CD14-positive monocyte (primary cell): ENCODE measurements at regions of chr5 and their contacts with region 1.

Region 1: GRCh38 chr5:132386644-132387286 is 17.3 kb downstream of the SLC22A5 start:
- DNase-seq: peak; percentile 65 to 81 (median 72)
- H3K4me3 ChIP-seq: peak overlapping the region in 1 of 3 experiments; percentile 37
- H3K4me3 Mint-ChIP-seq: no peak overlapping the region
- H3K27ac ChIP-seq: peak overlapping the region in 1 of 2 donors; percentile 79
- H3K27ac Mint-ChIP-seq: peak overlapping the region; percentile 37 to 97 (median 91)
- H3K4me1 ChIP-seq: peaks cover 39 to 47% of the 10 kb centered on the region in 2 donors
- H3K4me1 Mint-ChIP-seq: peaks cover 42% of the 10 kb centered on the region
- H3K27me3 ChIP-seq: no peaks in the 10 kb centered on the region
- H3K27me3 Mint-ChIP-seq: no peaks in the 10 kb centered on the region
- CTCF ChIP-seq: peak; percentile 87

Region 2: GRCh38 chr5:132407970-132408369 is 21.2 kb after region 1 on chr5:
- intact Hi-C with region 1: loop called in 1 of 2 experiments (anchors 1 kb)
- DNase-seq: no peak
- H3K4me3 ChIP-seq: no peak overlapping the region
- H3K4me3 Mint-ChIP-seq: no peak overlapping the region
- H3K27ac ChIP-seq: no peak overlapping the region
- H3K27ac Mint-ChIP-seq: no peak overlapping the region
- H3K4me1 ChIP-seq: peaks cover 28 to 32% of the 10 kb centered on the region in 2 donors
- H3K4me1 Mint-ChIP-seq: peaks cover 33% of the 10 kb centered on the region
- H3K27me3 ChIP-seq: no peaks in the 10 kb centered on the region
- H3K27me3 Mint-ChIP-seq: peaks cover 0 to 3% (median 2%) of the 10 kb centered on the region in 3 donors
- CTCF ChIP-seq: no peak

Region 3: GRCh38 chr5:132500931-132501630 is 114.3 kb after region 1 on chr5:
- intact Hi-C with region 1: loop called (anchors 1 kb)
- DNase-seq: peak; percentile 64 to 86 (median 74)
- H3K4me3 ChIP-seq: no peak overlapping the region
- H3K4me3 Mint-ChIP-seq: no peak overlapping the region
- H3K27ac ChIP-seq: peak overlapping the region in 1 of 2 donors; percentile 45
- H3K27ac Mint-ChIP-seq: peak overlapping the region in 5 of 7 donors; percentile 26 to 81 (median 50)
- H3K4me1 ChIP-seq: peaks cover 23 to 34% of the 10 kb centered on the region in 2 donors
- H3K4me1 Mint-ChIP-seq: peaks cover 36% of the 10 kb centered on the region
- H3K27me3 ChIP-seq: no peaks in the 10 kb centered on the region
- H3K27me3 Mint-ChIP-seq: peaks cover 0 to 4% (median 0%) of the 10 kb centered on the region in 3 donors
- CTCF ChIP-seq: peak; percentile 88

Region 4: GRCh38 chr5:132674671-132675506 is 288.1 kb after region 1 on chr5:
- intact Hi-C with region 1: no loop called
- DNase-seq: no peak
- H3K4me3 ChIP-seq: no peak overlapping the region
- H3K4me3 Mint-ChIP-seq: no peak overlapping the region
- H3K27ac ChIP-seq: no peak overlapping the region
- H3K27ac Mint-ChIP-seq: no peak overlapping the region
- H3K4me1 ChIP-seq: no peaks in the 10 kb centered on the region
- H3K4me1 Mint-ChIP-seq: no peaks in the 10 kb centered on the region
- H3K27me3 ChIP-seq: no peaks in the 10 kb centered on the region
- H3K27me3 Mint-ChIP-seq: peaks cover 2 to 5% (median 2%) of the 10 kb centered on the region in 3 donors
- CTCF ChIP-seq: no peak

Region 5: DNA sequence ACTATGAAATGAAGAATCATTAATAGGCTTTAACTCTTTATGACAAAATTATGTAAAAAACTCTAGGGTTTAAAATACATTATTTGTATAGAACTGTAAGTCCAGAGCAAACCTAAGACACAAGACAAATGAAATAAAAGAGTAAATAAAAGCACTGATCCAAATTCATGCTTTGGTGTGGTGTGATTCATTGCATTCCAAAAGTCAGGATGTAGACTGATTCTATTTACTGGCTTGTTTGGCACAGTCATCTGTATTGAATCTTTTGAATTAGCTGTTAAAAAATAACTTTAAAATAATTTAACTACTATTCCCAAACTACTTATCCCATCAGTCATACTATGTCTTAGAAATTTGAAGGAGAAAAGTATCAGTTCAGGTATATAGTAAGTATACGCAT is 318.1 kb after region 1 on chr5:
- intact Hi-C with region 1: no loop called
- DNase-seq: no peak
- H3K4me3 ChIP-seq: no peak overlapping the region
- H3K4me3 Mint-ChIP-seq: no peak overlapping the region
- H3K27ac ChIP-seq: no peak overlapping the region
- H3K27ac Mint-ChIP-seq: no peak overlapping the region
- H3K4me1 ChIP-seq: no peaks in the 10 kb centered on the region
- H3K4me1 Mint-ChIP-seq: peaks cover 6% of the 10 kb centered on the region
- H3K27me3 ChIP-seq: no peaks in the 10 kb centered on the region
- H3K27me3 Mint-ChIP-seq: no peaks in the 10 kb centered on the region
- CTCF ChIP-seq: no peak

Region 6: GRCh38 chr5:132820162-132820754 is 433.5 kb after region 1 on chr5:
- intact Hi-C with region 1: loop called (anchors 2 to 5 kb)
- DNase-seq: peak; percentile 81 to 90 (median 86)
- H3K4me3 ChIP-seq: peak overlapping the region in 1 of 3 experiments; percentile 59
- H3K4me3 Mint-ChIP-seq: peak overlapping the region; percentile 6 to 90
- H3K27ac ChIP-seq: no peak overlapping the region
- H3K27ac Mint-ChIP-seq: no peak overlapping the region
- H3K4me1 ChIP-seq: peaks cover 8 to 20% of the 10 kb centered on the region in 2 donors
- H3K4me1 Mint-ChIP-seq: peaks cover 22% of the 10 kb centered on the region
- H3K27me3 ChIP-seq: peaks cover 42 to 85% of the 10 kb centered on the region in 2 donors
- H3K27me3 Mint-ChIP-seq: peaks cover 70 to 76% (median 73%) of the 10 kb centered on the region in 3 donors
- CTCF ChIP-seq: peak; percentile 89

Region 7: GRCh38 chr5:132883261-132883834 is 496.6 kb after region 1 on chr5:
- intact Hi-C with region 1: loop called (anchors 10 kb)
- DNase-seq: peak; percentile 72 to 85 (median 82)
- H3K4me3 ChIP-seq: no peak overlapping the region
- H3K4me3 Mint-ChIP-seq: no peak overlapping the region
- H3K27ac ChIP-seq: no peak overlapping the region
- H3K27ac Mint-ChIP-seq: no peak overlapping the region
- H3K4me1 ChIP-seq: no peaks in the 10 kb centered on the region
- H3K4me1 Mint-ChIP-seq: peaks cover 5% of the 10 kb centered on the region
- H3K27me3 ChIP-seq: no peaks in the 10 kb centered on the region
- H3K27me3 Mint-ChIP-seq: no peaks in the 10 kb centered on the region
- CTCF ChIP-seq: peak; percentile 84